Panc1 (cell line): ENCODE measurements at regions of chr1 and their contacts with region 1.

Region 1: DNA sequence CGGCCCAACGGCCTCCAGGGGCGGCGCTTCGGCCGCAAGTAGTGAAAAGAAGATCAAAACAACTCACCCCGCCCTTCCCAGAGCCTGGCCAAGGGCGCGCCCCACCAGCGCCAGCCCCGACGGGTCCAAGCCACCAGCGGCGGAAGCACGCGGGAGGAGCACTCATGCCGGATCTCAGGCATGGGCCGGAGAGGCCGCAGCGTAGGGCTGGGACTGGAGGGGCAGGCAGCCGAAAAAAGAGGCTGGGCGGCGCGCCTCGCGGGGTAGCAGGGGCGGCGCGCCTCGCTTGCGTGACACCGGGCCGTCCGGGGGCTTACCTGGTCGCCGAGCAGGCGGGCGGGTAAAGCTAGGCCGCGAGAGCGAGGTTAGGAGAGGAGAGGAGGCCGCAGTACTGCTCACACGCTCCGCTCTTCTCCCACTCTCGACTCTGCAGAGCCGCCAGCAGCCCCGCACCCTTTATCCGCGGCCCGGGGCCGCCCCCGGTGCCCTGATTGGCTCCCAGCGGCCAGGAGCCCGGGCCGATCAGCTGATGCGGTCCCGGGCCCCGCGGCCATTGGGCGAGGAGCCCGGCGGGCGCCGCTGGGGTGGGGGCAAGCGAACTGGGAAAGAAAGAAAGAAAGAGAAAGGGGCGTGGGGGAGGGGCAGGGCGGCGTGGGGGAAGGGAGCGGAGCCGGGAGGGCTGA is at the start of gene GLUL:
- DNase-seq: no peak
- ATAC-seq: peak; percentile 95
- H3K4me3 ChIP-seq: peak within 1 kb of the TSS; percentile 57 to 64
- H3K27ac ChIP-seq: peak within 1 kb of the TSS; percentile 72
- H3K4me1 ChIP-seq: peaks cover 2% of the 10 kb centered on the region; the same call in 1 of the 2 replicates
- H3K27me3 ChIP-seq: peaks cover 11% of the 10 kb centered on the region
- CTCF ChIP-seq: no peak
- total RNA-seq, gene GLUL: 55.2 TPM

Region 2: DNA sequence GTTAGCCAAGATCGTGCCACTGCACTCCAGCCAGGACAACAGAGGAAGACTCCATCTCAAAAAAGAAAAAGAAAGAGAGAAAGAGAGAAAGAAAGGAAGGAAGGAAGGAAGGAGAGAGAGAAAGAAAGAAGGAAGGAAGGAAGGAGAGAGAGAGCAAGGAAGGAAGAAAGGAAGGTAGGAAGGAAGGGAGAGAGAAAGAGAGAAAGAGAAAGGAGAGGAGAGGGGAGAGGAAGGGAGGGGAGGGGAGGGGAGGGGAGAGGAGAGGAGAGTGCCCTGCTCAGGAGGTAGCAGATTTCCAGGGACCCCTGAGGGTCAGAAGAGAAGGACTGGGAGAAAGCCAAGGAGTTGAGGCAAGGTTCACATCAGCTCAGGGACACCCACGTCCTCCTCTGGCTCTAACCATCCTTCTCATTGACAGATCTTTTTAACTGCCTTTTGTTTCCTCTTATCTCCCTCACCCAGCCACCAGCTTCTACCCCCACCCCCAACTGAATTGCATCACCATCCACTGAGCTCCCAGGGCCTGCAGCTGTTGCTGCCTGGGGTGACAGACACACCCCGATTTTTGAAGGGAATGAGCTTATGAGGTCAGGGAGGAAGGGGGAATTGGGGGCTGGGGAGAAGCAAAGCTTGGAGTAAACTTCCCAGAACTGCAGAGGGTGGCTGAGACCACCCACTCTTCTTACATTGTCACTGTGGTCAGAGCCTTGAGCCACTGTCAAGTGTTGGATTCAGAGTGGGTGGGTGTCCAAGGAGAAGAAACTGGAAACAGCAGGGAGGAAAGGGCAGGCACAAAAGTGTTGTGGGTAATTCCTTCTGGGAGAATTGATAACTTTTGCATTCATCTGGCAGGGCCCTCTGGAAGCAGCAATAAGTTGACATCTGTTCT is 91.5 kb before region 1 on chr1:
- CTCF ChIA-PET with region 1: no interaction called
- POLR2A ChIA-PET with region 1: no interaction called
- in situ Hi-C with region 1: no loop called
- intact Hi-C with region 1: no loop called
- DNase-seq: no peak
- ATAC-seq: no peak
- H3K4me3 ChIP-seq: no peak overlapping the region
- H3K27ac ChIP-seq: no peak overlapping the region
- H3K4me1 ChIP-seq: no peaks in the 10 kb centered on the region
- H3K27me3 ChIP-seq: no peaks in the 10 kb centered on the region; the same call in 1 of the 2 replicates
- CTCF ChIP-seq: no peak

Region 3: GRCh38 chr1:182317611-182318161 is 73.8 kb before region 1 on chr1:
- CTCF ChIA-PET with region 1: interaction called, 3 read pairs
- POLR2A ChIA-PET with region 1: no interaction called
- in situ Hi-C with region 1: no loop called
- intact Hi-C with region 1: loop called (anchors 5 kb)
- DNase-seq: no peak
- ATAC-seq: no peak
- H3K4me3 ChIP-seq: no peak overlapping the region
- H3K27ac ChIP-seq: no peak overlapping the region
- H3K4me1 ChIP-seq: no peaks in the 10 kb centered on the region
- H3K27me3 ChIP-seq: no peaks in the 10 kb centered on the region; the same call in 1 of the 2 replicates
- CTCF ChIP-seq: no peak